CD4-positive, alpha-beta T cell (primary cell): ENCODE measurements at regions of chr1 and their contacts with region 1.

Region 1: GRCh38 chr1:58783993-58784757 is at the start of gene JUN:
- DNase-seq: peak; percentile 97 to 100 (median 98)
- ATAC-seq: peak; percentile 73
- H3K4me3 ChIP-seq: peak within 1 kb of the TSS; percentile 70
- H3K4me3 Mint-ChIP-seq: peak within 1 kb of the TSS; percentile 95
- H3K27ac ChIP-seq: peak within 1 kb of the TSS; percentile 99
- H3K27ac Mint-ChIP-seq: peak within 1 kb of the TSS; percentile 94
- H3K4me1 ChIP-seq: peaks cover 33% of the 10 kb centered on the region
- H3K4me1 Mint-ChIP-seq: peaks cover 38% of the 10 kb centered on the region
- H3K27me3 ChIP-seq: no peaks in the 10 kb centered on the region
- H3K27me3 Mint-ChIP-seq: peaks cover 11% of the 10 kb centered on the region
- CTCF ChIP-seq: no peak
- total RNA-seq, gene JUN: 585 to 588 TPM

Region 2: DNA sequence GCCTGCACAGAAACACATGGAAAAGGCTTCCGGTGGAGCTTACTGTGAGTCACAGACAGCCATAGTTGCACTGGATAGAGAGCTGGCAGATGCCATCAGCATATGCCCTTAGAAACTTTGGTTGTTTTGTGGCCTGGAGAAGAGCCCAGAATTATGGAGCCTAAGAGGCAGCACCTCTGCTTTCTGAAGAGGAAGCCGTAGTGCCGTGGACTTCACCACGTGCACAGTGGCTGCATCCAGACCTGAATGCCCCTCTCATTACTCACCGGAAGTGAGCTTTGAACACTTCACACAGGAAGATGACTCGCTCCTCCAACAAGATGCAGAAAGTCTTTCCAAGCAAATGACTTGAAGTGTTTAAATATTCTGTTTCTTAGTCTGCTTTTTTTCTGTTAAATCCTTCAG is 28.7 kb before region 1 on chr1:
- CTCF ChIA-PET with region 1: no interaction called
- POLR2A ChIA-PET with region 1: interaction called, 36 read pairs
- intact Hi-C with region 1: no loop called
- DNase-seq: peak in 12 of 14 experiments; percentile 12 to 75 (median 34)
- ATAC-seq: peak; percentile 82
- H3K4me3 ChIP-seq: no peak overlapping the region
- H3K4me3 Mint-ChIP-seq: peak overlapping the region; percentile 57
- H3K27ac ChIP-seq: no peak overlapping the region
- H3K27ac Mint-ChIP-seq: peak overlapping the region; percentile 62
- H3K4me1 ChIP-seq: peaks cover 31% of the 10 kb centered on the region
- H3K4me1 Mint-ChIP-seq: peaks cover 44% of the 10 kb centered on the region
- H3K27me3 ChIP-seq: no peaks in the 10 kb centered on the region
- H3K27me3 Mint-ChIP-seq: no peaks in the 10 kb centered on the region
- CTCF ChIP-seq: no peak

Region 3: GRCh38 chr1:58857680-58858673 is 73.8 kb after region 1 on chr1:
- CTCF ChIA-PET with region 1: interaction called, 7 read pairs
- POLR2A ChIA-PET with region 1: interaction called, 30 read pairs
- intact Hi-C with region 1: no loop called
- DNase-seq: peak in 11 of 14 experiments; percentile 2 to 54 (median 31)
- ATAC-seq: peak; percentile 87
- H3K4me3 ChIP-seq: no peak overlapping the region
- H3K4me3 Mint-ChIP-seq: peak overlapping the region; percentile 30
- H3K27ac ChIP-seq: peak overlapping the region; percentile 47 to 56
- H3K27ac Mint-ChIP-seq: peak overlapping the region; percentile 72
- H3K4me1 ChIP-seq: peaks cover 24% of the 10 kb centered on the region
- H3K4me1 Mint-ChIP-seq: peaks cover 51% of the 10 kb centered on the region
- H3K27me3 ChIP-seq: no peaks in the 10 kb centered on the region
- H3K27me3 Mint-ChIP-seq: no peaks in the 10 kb centered on the region
- CTCF ChIP-seq: no peak

Region 4: DNA sequence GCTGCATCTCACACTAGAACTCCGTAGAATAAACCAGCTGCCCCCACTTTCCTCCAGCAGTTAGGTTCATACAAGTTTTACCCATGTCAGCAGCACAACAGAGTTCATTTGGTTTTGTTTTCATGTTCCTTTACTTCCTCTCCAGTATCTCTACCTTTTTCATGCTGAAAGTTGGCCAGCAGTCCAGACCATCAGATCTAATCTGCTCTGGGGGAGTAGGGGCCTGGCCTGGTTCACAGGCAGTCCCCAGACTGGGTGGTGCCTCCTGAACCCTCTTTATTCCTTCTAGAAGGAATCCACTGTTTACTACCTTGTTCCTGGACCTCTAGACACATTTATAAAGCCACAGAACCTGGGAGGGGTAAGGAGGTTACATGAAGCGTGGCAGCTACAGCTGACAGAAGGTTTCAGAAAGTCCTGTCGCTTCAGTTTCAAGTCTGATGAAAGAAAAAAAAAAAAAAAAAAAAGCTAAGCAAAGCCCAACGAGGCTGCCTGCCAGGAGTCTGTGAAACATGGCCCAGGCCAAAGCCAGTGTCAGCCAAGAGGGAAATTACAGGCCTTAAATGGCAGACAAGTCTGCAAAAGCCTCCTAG is 184.3 kb after region 1 on chr1:
- CTCF ChIA-PET with region 1: interaction called, 3 read pairs
- POLR2A ChIA-PET with region 1: interaction called, 13 read pairs
- intact Hi-C with region 1: no loop called
- DNase-seq: peak in 6 of 14 experiments; percentile 3 to 60 (median 35)
- ATAC-seq: peak; percentile 81
- H3K4me3 ChIP-seq: no peak overlapping the region
- H3K4me3 Mint-ChIP-seq: peak overlapping the region; percentile 5
- H3K27ac ChIP-seq: peak overlapping the region; percentile 62 to 65
- H3K27ac Mint-ChIP-seq: peak overlapping the region; percentile 86
- H3K4me1 ChIP-seq: peaks cover 30% of the 10 kb centered on the region
- H3K4me1 Mint-ChIP-seq: peaks cover 42% of the 10 kb centered on the region
- H3K27me3 ChIP-seq: no peaks in the 10 kb centered on the region
- H3K27me3 Mint-ChIP-seq: no peaks in the 10 kb centered on the region
- CTCF ChIP-seq: no peak

Region 5: DNA sequence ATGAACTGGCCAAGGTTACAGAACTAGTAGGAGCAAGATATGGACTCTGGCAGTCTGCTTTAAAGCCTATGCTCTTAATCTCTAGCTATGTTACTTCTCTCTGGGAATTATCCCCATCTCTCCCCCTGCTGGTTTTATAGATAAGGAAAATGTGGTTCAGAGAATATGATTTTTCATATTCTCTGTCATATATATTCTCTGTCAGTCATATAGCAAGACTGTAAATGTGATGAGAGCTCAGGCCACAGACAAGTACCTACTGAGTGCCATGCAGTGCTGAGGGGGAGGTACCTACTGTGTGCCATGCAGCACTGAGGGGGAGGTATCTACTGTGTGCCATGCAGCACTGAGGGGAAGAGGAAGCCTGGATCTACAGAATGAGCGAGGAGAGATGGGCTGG is 292.4 kb after region 1 on chr1:
- CTCF ChIA-PET with region 1: no interaction called
- POLR2A ChIA-PET with region 1: interaction called, 8 read pairs
- intact Hi-C with region 1: loop called (anchors 5 kb)
- DNase-seq: no peak
- ATAC-seq: no peak
- H3K4me3 ChIP-seq: no peak overlapping the region
- H3K4me3 Mint-ChIP-seq: no peak overlapping the region
- H3K27ac ChIP-seq: no peak overlapping the region
- H3K27ac Mint-ChIP-seq: no peak overlapping the region
- H3K4me1 ChIP-seq: peaks cover 13% of the 10 kb centered on the region
- H3K4me1 Mint-ChIP-seq: peaks cover 11% of the 10 kb centered on the region
- H3K27me3 ChIP-seq: no peaks in the 10 kb centered on the region
- H3K27me3 Mint-ChIP-seq: no peaks in the 10 kb centered on the region
- CTCF ChIP-seq: peak; percentile 14

Region 6: GRCh38 chr1:59814180-59814900 is 1030.2 kb after region 1 on chr1:
- CTCF ChIA-PET with region 1: no interaction called
- POLR2A ChIA-PET with region 1: interaction called, 11 read pairs
- intact Hi-C with region 1: loop called in 1 of 2 experiments (anchors 5 kb)
- DNase-seq: peak; percentile 81 to 97 (median 92)
- ATAC-seq: peak; percentile 93
- H3K4me3 ChIP-seq: peak overlapping the region; percentile 82
- H3K4me3 Mint-ChIP-seq: no peak overlapping the region
- H3K27ac ChIP-seq: peak overlapping the region in 1 of 2 donors; percentile 32
- H3K27ac Mint-ChIP-seq: no peak overlapping the region
- H3K4me1 ChIP-seq: peaks cover 17% of the 10 kb centered on the region
- H3K4me1 Mint-ChIP-seq: peaks cover 5% of the 10 kb centered on the region
- H3K27me3 ChIP-seq: no peaks in the 10 kb centered on the region
- H3K27me3 Mint-ChIP-seq: peaks cover 15% of the 10 kb centered on the region
- CTCF ChIP-seq: no peak